ENCODE measurements at regions of chr5 and their contacts with region 1.

Region 1: GRCh38 chr5:10627160-10627701 is 63.4 kb downstream of the ANKRD33B start:
- DNase-seq: no peak
- H3K4me3 ChIP-seq: peak overlapping the region; percentile 7 to 50 (median 22)
- H3K27ac ChIP-seq: peak overlapping the region; percentile 50
- H3K4me1 ChIP-seq: peaks cover 6% of the 10 kb centered on the region
- H3K27me3 ChIP-seq: no peaks in the 10 kb centered on the region
- CTCF ChIP-seq: no peak
- POLR2A ChIP-seq: no peak

Region 2: DNA sequence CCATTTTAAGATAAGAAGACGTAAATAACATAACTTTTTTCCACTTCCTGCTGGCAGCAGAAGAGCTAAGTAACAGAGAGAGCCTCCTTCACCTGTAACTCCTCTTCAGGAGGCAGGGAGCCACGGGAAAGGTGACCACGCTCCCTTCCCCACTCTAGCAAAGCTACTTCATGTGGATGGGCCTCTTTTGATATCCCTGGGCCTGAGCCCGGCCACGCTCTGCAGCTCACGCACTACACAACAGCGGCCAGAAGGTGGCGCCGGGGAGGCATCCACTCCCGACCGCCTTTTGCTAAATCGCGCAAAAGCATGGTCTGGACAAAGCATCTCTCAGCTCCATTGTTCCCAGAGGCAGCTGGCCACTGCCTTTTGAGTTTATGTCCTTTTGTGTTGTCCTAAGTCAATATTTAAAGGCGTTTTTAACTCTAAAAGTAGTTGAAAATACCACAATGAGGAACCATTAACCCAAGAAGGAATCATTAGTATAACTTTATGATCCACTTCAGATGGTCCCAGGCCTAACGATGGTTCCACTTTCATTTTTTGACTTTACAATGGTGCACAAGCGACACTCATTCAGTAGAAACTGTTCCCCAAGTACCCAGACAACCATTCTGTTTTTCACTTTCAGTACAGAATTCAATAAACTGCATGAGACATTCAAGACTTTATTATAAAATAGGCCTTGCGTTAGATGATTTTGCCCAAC is 343.1 kb before region 1 on chr5:
- CTCF ChIA-PET with region 1: interaction called, 16 read pairs
- POLR2A ChIA-PET with region 1: no interaction called
- dilution Hi-C with region 1: no loop called
- intact Hi-C with region 1: loop called (anchors 1 kb)
- DNase-seq: peak; percentile 78
- H3K4me3 ChIP-seq: no peak overlapping the region
- H3K27ac ChIP-seq: no peak overlapping the region
- H3K4me1 ChIP-seq: no peaks in the 10 kb centered on the region
- H3K27me3 ChIP-seq: no peaks in the 10 kb centered on the region
- CTCF ChIP-seq: peak; percentile 92 to 98
- POLR2A ChIP-seq: no peak

Region 3: DNA sequence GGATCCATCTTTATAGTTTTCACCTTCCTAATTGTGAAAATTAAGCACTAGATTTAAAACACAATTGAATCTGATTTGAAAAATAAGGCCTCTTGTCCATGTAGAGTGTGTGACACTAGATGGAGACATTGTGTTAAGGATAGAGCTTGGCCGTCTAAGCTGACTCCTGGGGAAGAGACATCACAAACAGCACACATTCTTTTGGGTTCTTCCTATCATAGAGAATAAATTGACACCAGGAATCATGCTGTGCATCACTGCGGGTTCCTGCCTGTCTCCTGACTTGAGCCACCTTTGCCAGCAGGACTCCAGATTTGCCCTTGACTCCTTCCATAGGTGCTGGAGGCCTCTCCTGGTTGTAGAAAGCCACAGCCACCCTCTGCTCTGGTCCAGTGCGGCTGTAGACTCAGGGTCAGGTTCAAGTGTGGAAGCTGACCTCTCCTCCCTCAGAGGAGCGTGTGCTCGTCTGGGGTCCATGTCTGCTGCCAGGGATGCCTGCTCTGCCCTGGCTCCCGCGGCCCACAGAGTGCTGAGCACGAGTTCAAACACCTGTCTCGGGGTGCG is 174.4 kb before region 1 on chr5:
- CTCF ChIA-PET with region 1: interaction called, 283 read pairs
- POLR2A ChIA-PET with region 1: interaction called, 3 read pairs
- dilution Hi-C with region 1: loop called (anchors 10 kb)
- intact Hi-C with region 1: loop called (anchors 1 kb)
- DNase-seq: peak; percentile 87
- H3K4me3 ChIP-seq: no peak overlapping the region
- H3K27ac ChIP-seq: no peak overlapping the region
- H3K4me1 ChIP-seq: peaks cover 10% of the 10 kb centered on the region
- H3K27me3 ChIP-seq: no peaks in the 10 kb centered on the region
- CTCF ChIP-seq: peak; percentile 56 to 67
- POLR2A ChIP-seq: no peak

Region 4: DNA sequence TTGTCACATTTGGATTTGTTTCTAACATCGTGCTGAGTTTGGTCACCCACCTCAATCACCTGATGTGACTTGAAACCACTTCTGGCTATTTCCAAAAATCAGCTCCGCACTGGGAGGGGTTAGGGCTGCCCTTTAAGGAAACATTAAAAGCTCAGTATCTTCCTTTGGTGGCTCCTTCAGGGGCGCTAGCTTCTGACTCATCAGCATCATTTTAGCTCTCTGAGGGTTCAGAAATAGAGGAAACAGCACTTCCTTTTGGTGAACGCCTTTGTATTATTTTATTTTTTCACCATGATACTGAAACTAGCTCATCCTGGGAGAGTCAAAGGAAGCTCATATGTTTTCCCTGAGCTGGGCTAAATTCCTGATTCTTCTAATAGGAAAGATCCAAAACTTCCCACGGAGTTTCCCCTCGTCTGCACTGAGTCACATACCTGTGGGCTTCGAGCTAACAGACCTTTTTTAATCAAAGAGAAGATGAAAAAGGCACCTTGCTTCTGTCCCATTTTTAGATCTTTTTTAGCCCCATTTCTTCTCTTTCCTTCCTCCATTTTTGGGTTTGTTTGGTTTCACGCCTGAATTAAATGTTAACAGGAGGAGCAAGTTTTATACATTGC is 137.3 kb before region 1 on chr5:
- CTCF ChIA-PET with region 1: interaction called, 19 read pairs
- POLR2A ChIA-PET with region 1: no interaction called
- dilution Hi-C with region 1: no loop called
- intact Hi-C with region 1: no loop called
- DNase-seq: peak; percentile 46
- H3K4me3 ChIP-seq: no peak overlapping the region
- H3K27ac ChIP-seq: no peak overlapping the region
- H3K4me1 ChIP-seq: peaks cover 10% of the 10 kb centered on the region
- H3K27me3 ChIP-seq: no peaks in the 10 kb centered on the region
- CTCF ChIP-seq: no peak
- POLR2A ChIP-seq: no peak

Region 5: DNA sequence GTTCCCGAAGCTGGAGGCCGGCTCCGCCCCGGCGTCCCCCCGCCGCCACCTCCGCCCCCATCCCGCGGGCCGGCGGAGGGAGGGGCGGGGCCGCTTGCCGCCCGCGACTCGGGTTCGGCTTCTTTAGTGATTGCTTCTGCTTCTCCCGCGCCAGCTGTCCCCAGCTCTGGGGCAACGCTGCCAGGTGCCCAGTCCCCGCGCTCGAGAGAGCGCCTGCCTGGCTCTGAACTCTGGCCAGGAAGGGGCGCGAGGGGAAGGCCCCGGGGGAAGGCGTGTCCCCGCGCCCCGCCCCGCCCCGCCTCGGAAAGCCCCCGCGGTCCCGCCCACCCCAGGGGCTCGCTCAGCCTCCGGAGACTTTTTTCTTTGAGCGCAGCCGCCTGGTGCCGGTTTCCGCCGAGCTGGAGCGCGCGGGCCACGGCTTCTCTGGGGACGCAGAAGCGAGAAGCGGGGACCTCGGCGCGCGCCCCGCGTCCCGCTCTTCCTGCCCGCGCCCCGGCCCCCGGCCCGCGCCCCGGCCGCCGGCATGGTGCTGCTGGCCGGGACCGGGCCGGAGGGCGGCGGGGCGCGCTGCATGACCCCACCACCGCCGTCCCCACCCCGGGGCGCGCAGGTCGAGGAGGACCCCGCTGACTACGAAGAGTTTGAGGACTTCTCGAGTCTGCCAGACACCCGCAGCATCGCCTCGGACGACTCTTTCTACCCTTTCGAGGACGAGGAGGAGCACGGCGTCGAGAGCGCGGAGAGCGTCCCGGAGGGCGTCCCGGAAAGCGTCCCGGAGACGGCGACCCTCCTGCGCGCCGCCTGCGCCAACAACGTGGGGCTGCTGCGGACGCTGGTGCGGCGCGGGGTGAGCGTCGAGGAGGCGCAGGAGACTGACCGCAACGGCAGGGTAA is 63.0 kb before region 1 on chr5 and contains the start of gene ANKRD33B:
- CTCF ChIA-PET with region 1: interaction called, 37 read pairs
- POLR2A ChIA-PET with region 1: interaction called, 4 read pairs
- dilution Hi-C with region 1: no loop called
- intact Hi-C with region 1: loop called (anchors 1 kb)
- DNase-seq: peak; percentile 72
- H3K4me3 ChIP-seq: peak within 1 kb of the TSS; percentile 51 to 62 (median 51)
- H3K27ac ChIP-seq: peak within 1 kb of the TSS; percentile 79
- H3K4me1 ChIP-seq: peaks cover 18% of the 10 kb centered on the region
- H3K27me3 ChIP-seq: no peaks in the 10 kb centered on the region
- CTCF ChIP-seq: no peak
- POLR2A ChIP-seq: peak; percentile 70
- total RNA-seq, gene ANKRD33B: 4.4 and 5.4 TPM in 2 replicates

Region 6: DNA sequence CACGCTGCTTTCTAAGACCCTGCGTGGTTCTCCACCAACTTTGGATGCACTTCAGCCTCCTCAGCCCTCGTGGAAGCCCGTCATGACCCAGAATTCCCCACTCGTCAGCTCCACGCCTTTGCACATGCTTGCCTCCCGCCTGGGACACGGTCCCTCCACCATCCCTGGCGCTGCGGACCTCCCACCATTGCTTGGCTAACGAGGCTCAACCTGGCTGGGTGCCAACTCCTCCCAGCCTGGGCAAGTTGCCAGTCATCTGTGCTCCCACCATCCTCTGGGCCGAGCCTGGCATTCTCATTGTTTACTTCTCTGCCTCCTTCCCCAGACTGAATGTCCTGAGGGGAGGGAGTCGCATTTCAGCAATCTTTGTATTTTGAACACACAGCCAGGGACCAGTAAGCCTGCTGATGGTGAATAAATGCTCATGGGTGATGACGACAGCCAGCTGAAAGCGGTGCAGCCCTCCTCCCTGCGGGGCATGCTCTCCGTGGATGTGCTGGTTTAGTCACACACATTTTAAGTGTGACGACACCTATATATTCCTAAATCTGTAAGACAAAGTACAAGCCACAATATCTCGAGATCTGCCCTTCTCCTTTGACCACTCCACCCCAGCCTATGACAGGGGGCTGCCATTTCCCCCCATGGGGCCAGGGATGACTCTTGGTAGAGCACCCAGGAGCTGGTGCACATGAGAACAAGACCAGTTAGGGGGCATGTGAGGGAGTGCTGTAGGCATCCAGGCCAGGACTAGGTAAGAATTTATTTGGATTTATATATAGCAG is 25.8 kb before region 1 on chr5:
- CTCF ChIA-PET with region 1: interaction called, 10 read pairs
- POLR2A ChIA-PET with region 1: no interaction called
- dilution Hi-C with region 1: no loop called
- intact Hi-C with region 1: loop called (anchors 1 kb)
- DNase-seq: peak; percentile 97
- H3K4me3 ChIP-seq: no peak overlapping the region
- H3K27ac ChIP-seq: peak overlapping the region; percentile 39
- H3K4me1 ChIP-seq: peaks cover 11% of the 10 kb centered on the region
- H3K27me3 ChIP-seq: no peaks in the 10 kb centered on the region
- CTCF ChIP-seq: no peak
- POLR2A ChIP-seq: no peak

Region 7: DNA sequence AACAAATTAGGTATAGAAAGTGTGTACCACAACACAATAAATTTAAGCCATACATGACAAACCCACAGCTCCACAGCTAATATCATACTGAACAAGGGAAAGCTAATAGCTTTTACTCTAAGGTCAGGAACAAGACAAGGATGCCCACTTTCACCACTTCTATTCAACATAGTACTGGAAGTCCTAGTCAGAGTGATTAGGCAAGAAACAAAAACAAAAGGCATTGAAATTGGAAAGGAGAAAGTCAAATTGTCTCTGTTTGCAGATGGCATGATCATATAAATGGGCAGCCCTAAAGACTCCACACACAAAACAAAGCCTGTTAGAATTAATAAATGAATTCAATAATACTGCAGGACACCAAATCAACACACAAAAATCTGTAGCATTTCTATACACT is 728.3 kb after region 1 on chr5:
- CTCF ChIA-PET with region 1: no interaction called
- POLR2A ChIA-PET with region 1: no interaction called
- dilution Hi-C with region 1: no loop called
- intact Hi-C with region 1: no loop called
- DNase-seq: no peak
- H3K4me3 ChIP-seq: no peak overlapping the region
- H3K27ac ChIP-seq: no peak overlapping the region
- H3K4me1 ChIP-seq: no peaks in the 10 kb centered on the region
- H3K27me3 ChIP-seq: no peaks in the 10 kb centered on the region
- CTCF ChIP-seq: no peak
- POLR2A ChIP-seq: no peak

Measured in endothelial cell of umbilical vein (primary cell).